H1 (cell line): ENCODE measurements at regions of chr16 and their contacts with region 1.

Region 1: GRCh38 chr16:55465077-55465896 is 13.7 kb upstream of the MMP2 start:
- DNase-seq: peak; percentile 84 to 98
- H3K4me3 ChIP-seq: no peak overlapping the region
- H3K27ac ChIP-seq: no peak overlapping the region
- H3K4me1 ChIP-seq: no peaks in the 10 kb centered on the region
- H3K27me3 ChIP-seq: peaks cover 0 to 1% (median 0%) of the 10 kb centered on the region in 4 experiments; a peak in 3 of 7 replicates
- CTCF ChIP-seq: peak; percentile 85 to 100 (median 99)
- EP300 ChIP-seq: no peak; a peak in 1 of 3 replicates
- POLR2A ChIP-seq: no peak
- RAD21 ChIP-seq: peak; percentile 100

Region 2: GRCh38 chr16:55349867-55350266 is 115.4 kb before region 1 on chr16:
- CTCF ChIA-PET with region 1: no interaction called
- POLR2A ChIA-PET with region 1: no interaction called
- DNase-seq: no peak
- H3K4me3 ChIP-seq: no peak overlapping the region
- H3K27ac ChIP-seq: no peak overlapping the region
- H3K4me1 ChIP-seq: no peaks in the 10 kb centered on the region
- H3K27me3 ChIP-seq: no peaks in the 10 kb centered on the region
- CTCF ChIP-seq: no peak
- EP300 ChIP-seq: no peak
- POLR2A ChIP-seq: no peak
- RAD21 ChIP-seq: no peak

Region 3: GRCh38 chr16:55480228-55480661 is 15.0 kb after region 1 on chr16:
- CTCF ChIA-PET with region 1: interaction called, 55 read pairs
- POLR2A ChIA-PET with region 1: interaction called, 8 read pairs
- DNase-seq: peak in 1 of 2 experiments; percentile 63
- H3K4me3 ChIP-seq: peak overlapping the region; percentile 28 to 75 (median 65)
- H3K27ac ChIP-seq: no peak overlapping the region
- H3K4me1 ChIP-seq: peaks cover 3 to 16% (median 7%) of the 10 kb centered on the region in 4 experiments
- H3K27me3 ChIP-seq: peaks cover 7 to 48% (median 31%) of the 10 kb centered on the region in 4 experiments
- CTCF ChIP-seq: no peak
- EP300 ChIP-seq: no peak
- POLR2A ChIP-seq: no peak
- RAD21 ChIP-seq: no peak

Region 4: DNA sequence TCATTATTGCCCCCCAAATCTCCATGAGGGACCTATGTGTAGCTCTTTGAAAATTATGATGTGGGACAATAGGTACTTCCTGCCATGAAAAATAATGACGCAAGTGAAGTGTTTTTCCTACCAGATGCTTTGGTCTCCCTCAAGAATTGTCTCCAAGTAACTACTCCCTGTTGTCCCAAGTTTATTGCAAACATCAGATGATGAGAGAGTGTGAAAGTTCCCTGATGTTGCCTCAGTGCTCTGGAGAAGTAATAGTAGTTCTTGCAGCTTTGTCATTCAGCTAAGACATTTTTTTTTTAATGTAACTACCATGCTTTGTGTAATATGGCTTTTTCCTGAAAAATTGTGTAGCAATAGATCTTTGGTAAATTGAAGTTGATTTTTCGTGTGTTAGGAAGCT is 63.7 kb after region 1 on chr16:
- CTCF ChIA-PET with region 1: interaction called, 21 read pairs
- POLR2A ChIA-PET with region 1: no interaction called
- DNase-seq: no peak
- H3K4me3 ChIP-seq: no peak overlapping the region
- H3K27ac ChIP-seq: no peak overlapping the region
- H3K4me1 ChIP-seq: no peaks in the 10 kb centered on the region
- H3K27me3 ChIP-seq: no peaks in the 10 kb centered on the region
- CTCF ChIP-seq: no peak
- EP300 ChIP-seq: no peak
- POLR2A ChIP-seq: no peak
- RAD21 ChIP-seq: no peak

Region 5: DNA sequence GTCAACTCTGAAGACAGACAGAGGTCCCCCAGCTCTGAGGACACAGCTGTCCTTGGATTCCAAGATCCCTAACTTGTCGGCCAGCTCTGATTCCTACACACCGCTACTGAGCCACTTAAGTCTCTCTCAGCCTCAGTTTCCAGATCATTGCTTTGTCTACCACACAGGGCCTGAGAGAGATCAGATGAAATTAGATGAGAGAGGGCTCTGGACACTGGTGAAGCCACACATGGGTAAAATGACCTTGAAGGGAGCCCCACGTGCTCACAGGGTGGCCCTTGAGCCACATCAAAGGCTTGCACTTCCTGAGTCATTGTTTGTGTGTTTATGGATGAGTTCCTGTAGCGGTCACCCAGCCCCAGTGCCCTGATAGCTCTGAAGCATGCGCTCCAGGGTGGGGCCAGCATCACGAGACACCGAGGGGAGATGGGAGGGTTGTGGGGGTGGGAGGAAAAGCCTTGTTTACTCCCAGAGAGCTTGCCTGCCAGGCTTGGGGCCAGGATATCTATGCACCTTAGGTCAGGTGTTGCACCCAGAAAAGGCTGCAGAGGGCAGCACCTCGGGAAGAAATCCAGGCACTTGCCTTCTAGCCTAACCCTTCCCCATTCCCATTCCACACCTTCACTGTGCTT is 157.8 kb after region 1 on chr16:
- CTCF ChIA-PET with region 1: interaction called, 23 read pairs
- POLR2A ChIA-PET with region 1: no interaction called
- DNase-seq: peak; percentile 41 to 75
- H3K4me3 ChIP-seq: no peak overlapping the region
- H3K27ac ChIP-seq: no peak overlapping the region
- H3K4me1 ChIP-seq: 0 out of 7 replicates have a peak, but pooled peaks cover 0 to 3% (median 0%) of the 10 kb centered on the region in 4 experiments
- H3K27me3 ChIP-seq: no peaks in the 10 kb centered on the region; a peak in 1 of 7 replicates
- CTCF ChIP-seq: peak; percentile 65 to 86 (median 74)
- EP300 ChIP-seq: no peak
- POLR2A ChIP-seq: no peak
- RAD21 ChIP-seq: peak; percentile 54 to 69

Region 6: GRCh38 chr16:55661941-55662643 is 196.8 kb after region 1 on chr16:
- CTCF ChIA-PET with region 1: interaction called, 25 read pairs
- POLR2A ChIA-PET with region 1: no interaction called
- DNase-seq: no peak
- H3K4me3 ChIP-seq: no peak overlapping the region
- H3K27ac ChIP-seq: no peak overlapping the region
- H3K4me1 ChIP-seq: no peaks in the 10 kb centered on the region
- H3K27me3 ChIP-seq: peaks cover 9 to 22% (median 14%) of the 10 kb centered on the region in 4 experiments
- CTCF ChIP-seq: no peak
- EP300 ChIP-seq: no peak
- POLR2A ChIP-seq: no peak
- RAD21 ChIP-seq: no peak

Region 7: DNA sequence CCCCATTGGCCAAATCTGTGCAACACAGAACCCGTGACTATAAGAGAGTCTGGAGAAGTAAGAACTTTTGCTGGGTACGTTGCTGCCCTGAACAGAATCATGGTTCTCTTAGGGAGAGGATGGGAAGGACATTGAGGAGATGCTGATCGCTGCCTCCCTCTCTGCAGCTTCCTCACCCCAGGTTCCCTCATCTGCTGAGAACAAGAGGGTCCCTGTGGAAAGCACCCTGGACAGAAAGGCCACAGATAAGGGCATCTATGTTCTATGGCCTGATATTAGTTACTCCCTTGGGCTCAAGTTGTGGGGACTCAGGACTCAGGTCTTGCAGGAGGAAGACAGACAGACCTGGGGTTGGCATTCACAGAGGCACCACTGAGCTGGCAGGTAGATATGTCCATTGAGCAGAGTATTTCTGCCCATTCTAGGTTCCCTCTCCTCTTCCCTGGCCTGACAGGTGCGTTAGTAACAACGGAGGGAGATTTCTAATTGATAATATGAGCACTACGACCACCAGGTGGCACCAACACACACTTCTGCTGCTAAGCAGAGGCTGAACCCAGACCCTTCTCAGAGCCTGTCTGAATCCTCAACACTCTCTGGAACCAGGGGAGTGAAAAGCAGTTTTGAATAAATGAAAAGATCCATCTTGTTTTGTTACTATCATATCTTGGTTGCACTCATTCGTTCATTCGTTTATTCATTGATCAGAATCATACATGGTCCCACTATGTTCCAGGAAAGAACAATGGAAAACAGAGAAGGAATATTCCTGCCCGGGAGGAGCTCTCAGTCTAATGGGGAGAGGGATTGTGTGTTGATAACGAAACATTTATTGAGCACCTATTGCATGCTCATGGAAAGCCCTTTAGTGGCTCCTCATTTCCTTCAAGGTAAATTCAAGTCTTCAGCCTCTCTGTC is 246.9 kb after region 1 on chr16:
- CTCF ChIA-PET with region 1: interaction called, 446 read pairs
- POLR2A ChIA-PET with region 1: no interaction called
- DNase-seq: peak in 1 of 2 experiments; percentile 81
- H3K4me3 ChIP-seq: no peak overlapping the region
- H3K27ac ChIP-seq: no peak overlapping the region
- H3K4me1 ChIP-seq: no peaks in the 10 kb centered on the region
- H3K27me3 ChIP-seq: no peaks in the 10 kb centered on the region; a peak in 1 of 7 replicates
- CTCF ChIP-seq: peak; percentile 37 to 80 (median 78)
- EP300 ChIP-seq: no peak
- POLR2A ChIP-seq: no peak
- RAD21 ChIP-seq: peak; percentile 82 to 85